Mammary epithelial cell (primary cell): ENCODE measurements at regions of chr7 and their contacts with region 1.

Region 1: DNA sequence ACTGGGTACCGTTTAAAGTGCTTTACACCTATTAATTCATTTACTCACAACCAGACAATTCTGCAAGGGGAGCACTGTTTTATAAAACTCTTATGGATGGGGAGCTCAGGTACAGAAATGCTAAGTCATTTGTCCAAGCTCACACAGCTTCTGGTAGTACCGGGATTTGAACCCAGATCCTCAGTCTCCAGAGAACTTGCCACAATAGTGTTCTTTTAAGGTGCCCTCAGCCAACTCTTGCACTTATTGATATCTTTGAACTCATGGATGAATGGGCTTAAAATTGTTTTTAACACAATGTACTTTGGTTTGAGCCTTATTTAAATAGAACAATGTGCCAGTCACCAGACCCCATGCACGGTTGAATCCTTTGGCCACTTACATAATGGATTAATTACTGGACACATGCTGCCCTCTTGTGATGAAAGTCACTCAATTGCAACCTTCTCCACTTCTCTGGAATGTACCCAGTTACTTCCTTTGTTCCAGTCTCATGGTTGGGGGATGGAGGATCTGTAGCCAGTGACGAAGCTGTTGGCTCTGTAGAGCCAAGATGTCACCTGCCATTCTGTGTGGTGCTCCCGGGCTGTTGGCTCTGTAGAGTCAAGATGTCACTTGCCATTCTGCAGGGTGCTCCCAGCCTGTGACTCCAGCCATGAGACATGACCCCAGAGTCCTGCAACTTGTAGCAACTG is 65.6 kb downstream of the NOD1 start:
- DNase-seq: peak; percentile 78
- H3K4me3 ChIP-seq: no peak overlapping the region
- H3K27ac ChIP-seq: no peak overlapping the region
- H3K4me1 ChIP-seq: peaks cover 5% of the 10 kb centered on the region
- H3K27me3 ChIP-seq: no peaks in the 10 kb centered on the region
- CTCF ChIP-seq: peak; percentile 62 to 67

Region 2: GRCh38 chr7:29564496-29565223 is 848.3 kb before region 1 on chr7:
- CTCF ChIA-PET with region 1: no interaction called
- dilution Hi-C with region 1: no loop called
- in situ Hi-C with region 1: no loop called
- intact Hi-C with region 1: no loop called
- DNase-seq: peak; percentile 85
- H3K4me3 ChIP-seq: peak overlapping the region; percentile 64 to 84 (median 72)
- H3K27ac ChIP-seq: peak overlapping the region; percentile 78
- H3K4me1 ChIP-seq: peaks cover 29% of the 10 kb centered on the region
- H3K27me3 ChIP-seq: no peaks in the 10 kb centered on the region
- CTCF ChIP-seq: no peak

Region 3: DNA sequence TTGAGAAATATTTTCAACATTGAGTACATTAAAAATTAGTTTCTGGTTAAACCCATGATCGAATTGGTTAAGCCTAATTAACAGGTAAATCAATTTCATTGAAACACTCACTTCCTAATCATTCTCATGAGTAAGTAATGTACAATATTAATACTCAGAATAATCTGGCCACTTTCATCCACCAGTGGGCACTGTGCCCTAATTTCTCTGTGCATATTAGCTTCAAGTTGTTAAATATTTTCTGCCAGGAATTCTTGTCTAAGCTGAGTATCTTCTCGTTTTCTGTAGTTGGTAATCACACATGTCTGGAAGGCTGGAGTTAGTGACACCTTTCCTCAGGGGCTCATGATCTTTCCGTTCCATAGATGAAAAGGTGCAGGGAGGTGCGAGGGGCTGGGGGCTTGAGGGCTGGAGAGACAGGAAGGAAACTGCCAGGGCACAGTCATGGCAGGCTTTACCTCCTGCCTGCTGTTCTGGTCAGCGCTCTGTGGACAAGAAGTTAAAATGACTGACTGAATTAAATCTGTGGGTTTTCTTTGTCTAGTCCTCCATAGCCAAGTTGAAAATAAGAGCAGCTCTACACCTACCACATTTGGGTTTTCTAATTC is 534.8 kb before region 1 on chr7:
- CTCF ChIA-PET with region 1: no interaction called
- dilution Hi-C with region 1: no loop called
- in situ Hi-C with region 1: no loop called
- intact Hi-C with region 1: loop called (anchors 5 kb)
- DNase-seq: peak; percentile 33
- H3K4me3 ChIP-seq: no peak overlapping the region
- H3K27ac ChIP-seq: no peak overlapping the region
- H3K4me1 ChIP-seq: no peaks in the 10 kb centered on the region
- H3K27me3 ChIP-seq: no peaks in the 10 kb centered on the region
- CTCF ChIP-seq: peak; percentile 67 to 80

Region 4: DNA sequence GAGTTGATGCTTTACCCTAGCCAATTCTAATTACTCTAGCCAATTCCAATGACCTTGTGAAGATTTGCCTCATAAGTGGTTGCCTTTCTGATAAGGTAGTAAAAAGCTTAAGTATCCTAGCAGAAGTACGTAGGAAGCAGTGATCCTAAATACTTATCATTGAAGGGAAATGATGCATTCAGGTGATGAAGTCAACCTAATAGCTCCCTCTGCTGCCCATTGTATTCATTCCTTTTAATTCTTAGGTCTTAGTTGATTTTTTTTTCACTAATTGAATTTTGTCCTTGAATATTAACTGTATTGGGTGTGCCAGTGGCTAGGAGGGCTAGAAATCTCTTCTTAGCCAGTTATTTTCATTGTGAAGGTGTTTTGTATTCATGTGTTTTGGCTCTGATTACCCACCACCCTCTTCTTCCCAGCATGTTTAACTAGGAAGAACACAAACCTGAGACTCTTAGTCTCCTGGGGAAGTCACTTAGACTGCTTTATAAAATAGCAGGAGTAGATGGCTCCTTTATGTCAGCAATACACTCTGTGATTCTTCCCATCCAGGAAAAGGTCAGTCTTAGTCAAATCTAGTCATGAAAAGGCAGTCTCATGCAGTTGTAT is 338.4 kb before region 1 on chr7:
- CTCF ChIA-PET with region 1: no interaction called
- dilution Hi-C with region 1: no loop called
- in situ Hi-C with region 1: no loop called
- intact Hi-C with region 1: loop called (anchors 2 kb)
- DNase-seq: peak; percentile 31
- H3K4me3 ChIP-seq: no peak overlapping the region
- H3K27ac ChIP-seq: no peak overlapping the region
- H3K4me1 ChIP-seq: no peaks in the 10 kb centered on the region
- H3K27me3 ChIP-seq: no peaks in the 10 kb centered on the region
- CTCF ChIP-seq: peak; percentile 34 to 58

Region 5: DNA sequence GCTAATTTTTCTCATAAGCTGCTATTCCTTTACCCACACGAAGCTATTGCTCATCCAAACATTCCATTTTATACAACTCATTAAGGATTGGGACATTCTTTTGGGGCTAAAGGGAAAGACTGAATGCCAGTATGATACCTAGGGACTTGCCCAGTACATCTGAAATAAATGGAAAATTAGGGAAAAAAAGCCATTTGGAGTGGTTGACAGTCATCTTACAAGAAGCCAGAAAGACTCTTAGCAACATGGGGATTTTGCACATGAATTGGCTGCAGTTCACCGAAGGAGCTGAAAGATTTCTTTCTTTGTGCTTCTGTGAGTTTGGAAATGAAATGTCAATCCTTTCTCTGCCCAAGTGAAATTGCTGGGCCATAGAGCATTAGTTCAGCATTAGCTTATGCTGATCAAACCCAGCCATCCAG is 321.5 kb before region 1 on chr7:
- CTCF ChIA-PET with region 1: no interaction called
- dilution Hi-C with region 1: no loop called
- in situ Hi-C with region 1: no loop called
- intact Hi-C with region 1: no loop called
- DNase-seq: peak; percentile 70
- H3K4me3 ChIP-seq: no peak overlapping the region
- H3K27ac ChIP-seq: no peak overlapping the region
- H3K4me1 ChIP-seq: peaks cover 13% of the 10 kb centered on the region
- H3K27me3 ChIP-seq: no peaks in the 10 kb centered on the region
- CTCF ChIP-seq: no peak

Region 6: GRCh38 chr7:30225863-30226613 is 186.9 kb before region 1 on chr7:
- CTCF ChIA-PET with region 1: no interaction called
- dilution Hi-C with region 1: no loop called
- in situ Hi-C with region 1: no loop called
- intact Hi-C with region 1: loop called (anchors 2 kb)
- DNase-seq: peak; percentile 97
- H3K4me3 ChIP-seq: no peak overlapping the region
- H3K27ac ChIP-seq: peak overlapping the region; percentile 83
- H3K4me1 ChIP-seq: peaks cover 37% of the 10 kb centered on the region
- H3K27me3 ChIP-seq: no peaks in the 10 kb centered on the region
- CTCF ChIP-seq: no peak

Region 7: GRCh38 chr7:30445770-30446169 is 32.8 kb after region 1 on chr7:
- CTCF ChIA-PET with region 1: no interaction called
- dilution Hi-C with region 1: no loop called
- in situ Hi-C with region 1: no loop called
- intact Hi-C with region 1: no loop called
- DNase-seq: no peak
- H3K4me3 ChIP-seq: no peak overlapping the region
- H3K27ac ChIP-seq: no peak overlapping the region
- H3K4me1 ChIP-seq: no peaks in the 10 kb centered on the region
- H3K27me3 ChIP-seq: no peaks in the 10 kb centered on the region
- CTCF ChIP-seq: no peak

Region 8: GRCh38 chr7:30458311-30458710 is 45.4 kb after region 1 on chr7:
- CTCF ChIA-PET with region 1: no interaction called
- dilution Hi-C with region 1: no loop called
- in situ Hi-C with region 1: no loop called
- intact Hi-C with region 1: no loop called
- DNase-seq: no peak
- H3K4me3 ChIP-seq: no peak overlapping the region
- H3K27ac ChIP-seq: no peak overlapping the region
- H3K4me1 ChIP-seq: no peaks in the 10 kb centered on the region
- H3K27me3 ChIP-seq: no peaks in the 10 kb centered on the region
- CTCF ChIP-seq: no peak

Region 9: DNA sequence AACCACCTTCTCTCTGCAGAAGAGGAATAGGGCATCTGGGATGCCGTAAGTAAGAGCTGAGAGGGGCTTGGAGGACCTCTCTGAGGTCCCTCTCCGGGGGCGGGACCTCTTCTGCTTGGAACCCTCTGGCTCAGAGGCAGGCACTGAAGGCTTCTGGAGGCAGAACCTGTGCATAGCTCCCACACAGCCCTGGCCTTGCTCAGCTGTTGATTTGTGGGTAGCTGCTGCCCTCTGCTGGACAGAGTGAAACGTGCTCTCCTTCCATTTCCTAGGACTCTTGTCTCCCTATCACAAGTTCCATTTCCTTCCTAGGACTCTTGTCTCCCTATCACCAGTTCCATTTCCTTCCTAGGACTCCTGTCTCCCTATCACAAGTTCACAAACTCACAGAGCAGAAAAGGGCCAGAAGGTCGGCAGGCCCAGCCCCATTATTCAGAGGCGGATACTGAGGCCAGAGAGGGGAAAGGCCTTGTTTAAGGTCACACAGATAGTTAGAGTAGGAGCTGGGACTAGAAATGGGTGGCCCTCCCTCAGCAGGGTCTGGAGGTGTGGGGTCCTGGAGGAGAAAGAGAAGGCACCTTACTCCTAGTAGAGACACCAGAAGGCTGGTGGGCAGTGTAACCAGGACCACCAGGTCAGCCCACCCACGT is 151.4 kb after region 1 on chr7:
- CTCF ChIA-PET with region 1: no interaction called
- dilution Hi-C with region 1: no loop called
- in situ Hi-C with region 1: no loop called
- intact Hi-C with region 1: loop called (anchors 2 kb)
- DNase-seq: peak; percentile 78
- H3K4me3 ChIP-seq: no peak overlapping the region
- H3K27ac ChIP-seq: peak overlapping the region; percentile 77
- H3K4me1 ChIP-seq: peaks cover 24% of the 10 kb centered on the region
- H3K27me3 ChIP-seq: no peaks in the 10 kb centered on the region
- CTCF ChIP-seq: peak; percentile 81 to 91